AG04449 (cell line): ENCODE measurements at regions of chr1 and their contacts with region 1.

Region 1: GRCh38 chr1:231618609-231619256 is 7.9 kb upstream of the DISC1 start:
- DNase-seq: no peak
- H3K4me3 ChIP-seq: no peak overlapping the region
- CTCF ChIP-seq: no peak

Region 2: DNA sequence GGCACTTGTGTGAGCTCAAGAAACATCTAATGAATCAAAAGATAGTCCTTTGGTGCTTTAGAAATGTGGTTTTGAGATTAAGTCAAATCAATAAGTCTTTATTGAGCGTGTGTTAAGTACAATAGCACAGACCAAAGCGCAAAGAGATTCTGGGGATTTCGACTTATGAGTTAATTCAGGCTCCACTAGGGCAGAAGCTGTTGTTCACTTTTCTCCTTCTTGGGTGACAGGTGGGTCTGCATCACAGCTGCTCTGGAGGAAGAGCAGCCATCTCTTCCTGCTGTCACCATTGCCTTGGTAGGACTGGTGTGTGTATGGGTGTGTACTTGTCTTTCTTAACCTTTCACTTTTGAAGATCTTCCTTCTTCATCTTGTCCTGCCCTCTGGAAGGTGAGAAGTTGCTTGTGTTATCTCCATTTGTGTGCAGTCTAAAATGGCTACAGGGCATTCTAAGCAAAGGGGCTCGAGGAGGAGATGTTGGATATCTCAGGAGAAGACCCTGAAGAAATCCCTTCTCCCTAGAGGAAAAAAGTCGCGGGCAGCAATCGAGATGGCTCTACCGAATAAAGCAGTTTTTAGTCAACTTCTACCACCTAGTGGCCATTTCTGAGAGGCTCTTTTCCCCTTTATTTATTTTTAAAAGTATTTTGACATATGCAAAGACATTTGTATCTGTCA is 15.0 kb before region 1 on chr1:
- CTCF ChIA-PET with region 1: interaction called, 30 read pairs
- POLR2A ChIA-PET with region 1: no interaction called
- DNase-seq: no peak
- H3K4me3 ChIP-seq: peak overlapping the region; percentile 60
- CTCF ChIP-seq: peak; percentile 42

Region 3: GRCh38 chr1:231679109-231679508 is 60.4 kb after region 1 on chr1:
- CTCF ChIA-PET with region 1: no interaction called
- POLR2A ChIA-PET with region 1: no interaction called
- DNase-seq: no peak
- H3K4me3 ChIP-seq: no peak overlapping the region
- CTCF ChIP-seq: no peak